ENCODE measurements at regions of chr2 and their contacts with region 1.

Region 1: GRCh38 chr2:176126929-176127773 is 2.4 kb upstream of the HOXD8 start:
- DNase-seq: peak; percentile 81
- H3K4me3 Mint-ChIP-seq: no peak overlapping the region
- H3K27ac Mint-ChIP-seq: no peak overlapping the region
- H3K4me1 Mint-ChIP-seq: peaks cover 25% of the 10 kb centered on the region
- H3K27me3 Mint-ChIP-seq: peaks cover 68% of the 10 kb centered on the region

Region 2: DNA sequence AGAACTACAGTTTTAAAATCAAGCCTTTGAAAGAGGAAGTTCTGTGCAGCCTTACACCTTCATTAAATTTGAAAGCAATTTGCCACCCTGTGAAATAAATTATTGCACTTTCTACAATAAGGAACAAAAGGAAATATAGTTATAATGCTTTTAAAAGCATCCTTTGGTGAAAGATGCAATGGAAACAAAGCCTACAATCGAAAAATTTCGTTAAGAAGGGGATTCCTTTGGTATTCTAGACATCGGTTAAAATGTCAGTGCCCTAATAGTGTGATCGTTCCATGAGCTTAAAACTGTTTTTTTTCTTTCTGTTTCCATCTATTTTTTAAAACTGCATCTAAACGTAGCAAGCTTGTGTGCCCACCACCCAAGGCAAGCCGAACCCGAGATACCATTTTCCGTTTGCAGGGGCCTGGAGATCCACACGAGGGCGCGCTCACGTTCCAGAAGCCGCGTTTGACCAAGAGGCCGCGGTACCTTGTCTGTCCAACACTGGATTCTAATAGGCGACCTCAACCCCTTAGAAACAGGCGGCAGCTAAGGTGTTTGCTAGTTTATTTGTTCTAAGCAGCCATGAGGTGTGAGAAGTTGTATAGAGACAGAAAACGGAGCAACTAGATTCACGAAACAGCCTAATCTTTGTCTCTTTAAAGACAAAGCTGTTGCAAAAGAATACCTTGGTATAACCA is 16.0 kb before region 1 on chr2:
- CTCF ChIA-PET with region 1: interaction called, 9 read pairs
- intact Hi-C with region 1: loop called (anchors 2 kb)
- DNase-seq: no peak
- H3K4me3 Mint-ChIP-seq: no peak overlapping the region
- H3K27ac Mint-ChIP-seq: no peak overlapping the region
- H3K4me1 Mint-ChIP-seq: peaks cover 17% of the 10 kb centered on the region
- H3K27me3 Mint-ChIP-seq: peaks cover 80% of the 10 kb centered on the region

Region 3: GRCh38 chr2:176157499-176158185 is 30.5 kb after region 1 on chr2:
- CTCF ChIA-PET with region 1: interaction called, 8 read pairs
- intact Hi-C with region 1: loop called (anchors 2 kb)
- DNase-seq: no peak
- H3K4me3 Mint-ChIP-seq: peak overlapping the region; percentile 32
- H3K27ac Mint-ChIP-seq: no peak overlapping the region
- H3K4me1 Mint-ChIP-seq: peaks cover 26% of the 10 kb centered on the region
- H3K27me3 Mint-ChIP-seq: peaks cover 74% of the 10 kb centered on the region

Region 4: GRCh38 chr2:176454893-176455811 is 328.0 kb after region 1 on chr2:
- CTCF ChIA-PET with region 1: interaction called, 54 read pairs
- intact Hi-C with region 1: loop called (anchors 1 kb)
- DNase-seq: peak; percentile 92
- H3K4me3 Mint-ChIP-seq: no peak overlapping the region
- H3K27ac Mint-ChIP-seq: no peak overlapping the region
- H3K4me1 Mint-ChIP-seq: peaks cover 2% of the 10 kb centered on the region
- H3K27me3 Mint-ChIP-seq: peaks cover 37% of the 10 kb centered on the region

Region 5: DNA sequence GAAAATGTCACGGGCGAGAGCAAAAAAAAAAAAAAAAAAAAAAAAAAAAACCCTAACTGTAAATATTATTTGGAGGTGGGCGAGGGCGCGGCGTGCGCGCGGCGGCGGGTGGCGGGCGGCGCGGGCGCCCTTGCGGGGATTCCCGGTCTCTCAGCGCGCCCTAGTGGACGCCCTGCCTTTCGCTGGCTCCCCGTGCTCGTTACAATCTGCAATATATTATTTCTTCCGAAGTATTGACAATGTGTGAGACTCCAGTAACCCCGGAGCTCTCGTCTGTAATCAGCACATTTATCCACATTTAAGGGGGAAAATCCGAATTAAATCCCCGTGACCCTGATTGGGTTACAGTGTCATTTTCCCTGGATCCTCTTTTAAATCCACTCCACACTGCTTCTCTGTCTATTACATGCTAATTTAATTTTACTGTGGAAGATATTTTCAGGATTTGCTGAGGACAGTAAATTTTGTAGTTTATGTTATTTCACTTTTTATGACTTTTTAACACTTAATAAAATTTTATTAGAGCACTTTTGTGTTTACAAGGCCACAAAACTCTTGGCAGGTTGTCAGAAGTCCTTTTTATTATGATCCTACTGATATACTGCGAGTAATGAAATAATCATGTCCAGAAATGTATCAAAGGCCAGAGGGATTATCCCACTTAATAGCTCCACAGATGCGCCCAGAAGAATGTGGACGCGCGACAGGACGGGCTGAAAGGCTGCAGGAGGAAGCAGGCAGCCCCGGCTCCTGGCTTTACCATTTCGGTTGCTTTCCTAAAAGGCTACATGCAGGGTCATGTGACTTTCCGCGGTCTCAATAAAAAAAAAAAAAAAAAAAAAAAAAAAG is 511.2 kb after region 1 on chr2:
- CTCF ChIA-PET with region 1: interaction called, 13 read pairs
- intact Hi-C with region 1: loop called (anchors 1 kb)
- DNase-seq: peak; percentile 69
- H3K4me3 Mint-ChIP-seq: peak overlapping the region; percentile 62
- H3K27ac Mint-ChIP-seq: no peak overlapping the region
- H3K4me1 Mint-ChIP-seq: peaks cover 2% of the 10 kb centered on the region
- H3K27me3 Mint-ChIP-seq: peaks cover 52% of the 10 kb centered on the region

Region 6: DNA sequence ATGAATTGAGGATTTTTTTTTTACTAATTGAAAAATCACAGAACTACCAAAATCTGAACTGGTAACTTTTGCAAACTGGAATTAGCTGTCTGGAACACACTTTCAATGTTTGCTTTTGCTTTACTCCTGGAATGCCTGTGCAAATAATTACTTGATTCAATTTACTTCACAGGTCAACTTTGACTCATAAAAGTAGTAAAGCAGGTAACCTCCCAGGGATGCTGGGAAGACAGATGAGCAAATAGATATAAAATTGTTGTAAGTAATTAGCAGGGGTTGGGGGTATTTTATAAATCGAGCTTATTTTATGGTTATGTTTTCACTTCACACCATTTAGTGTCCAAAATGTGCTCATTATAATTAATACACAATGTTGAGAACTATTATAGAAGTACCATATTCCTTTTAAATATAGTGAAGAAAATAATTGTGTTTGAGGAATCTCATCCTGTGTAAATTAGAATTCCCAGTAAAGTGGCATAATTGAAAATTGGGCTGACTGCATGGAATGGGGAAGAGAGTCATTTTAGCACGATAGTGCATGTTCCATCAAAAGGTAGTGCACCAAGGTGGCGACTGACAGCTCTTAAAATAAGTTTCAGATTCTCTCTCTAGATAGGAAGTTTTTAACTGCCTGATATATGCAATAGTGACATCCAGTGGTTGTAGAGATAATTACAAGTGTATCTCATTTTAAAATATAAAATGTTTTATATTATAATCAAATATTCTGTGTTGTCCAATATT is 687.3 kb after region 1 on chr2:
- CTCF ChIA-PET with region 1: interaction called, 4 read pairs
- intact Hi-C with region 1: loop called (anchors 2 kb)
- DNase-seq: peak; percentile 19
- H3K4me3 Mint-ChIP-seq: no peak overlapping the region
- H3K27ac Mint-ChIP-seq: no peak overlapping the region
- H3K4me1 Mint-ChIP-seq: peaks cover 12% of the 10 kb centered on the region
- H3K27me3 Mint-ChIP-seq: no peaks in the 10 kb centered on the region